OCI-LY7 (cell line): ENCODE measurements at regions of chr5 and their contacts with region 1.

Region 1: DNA sequence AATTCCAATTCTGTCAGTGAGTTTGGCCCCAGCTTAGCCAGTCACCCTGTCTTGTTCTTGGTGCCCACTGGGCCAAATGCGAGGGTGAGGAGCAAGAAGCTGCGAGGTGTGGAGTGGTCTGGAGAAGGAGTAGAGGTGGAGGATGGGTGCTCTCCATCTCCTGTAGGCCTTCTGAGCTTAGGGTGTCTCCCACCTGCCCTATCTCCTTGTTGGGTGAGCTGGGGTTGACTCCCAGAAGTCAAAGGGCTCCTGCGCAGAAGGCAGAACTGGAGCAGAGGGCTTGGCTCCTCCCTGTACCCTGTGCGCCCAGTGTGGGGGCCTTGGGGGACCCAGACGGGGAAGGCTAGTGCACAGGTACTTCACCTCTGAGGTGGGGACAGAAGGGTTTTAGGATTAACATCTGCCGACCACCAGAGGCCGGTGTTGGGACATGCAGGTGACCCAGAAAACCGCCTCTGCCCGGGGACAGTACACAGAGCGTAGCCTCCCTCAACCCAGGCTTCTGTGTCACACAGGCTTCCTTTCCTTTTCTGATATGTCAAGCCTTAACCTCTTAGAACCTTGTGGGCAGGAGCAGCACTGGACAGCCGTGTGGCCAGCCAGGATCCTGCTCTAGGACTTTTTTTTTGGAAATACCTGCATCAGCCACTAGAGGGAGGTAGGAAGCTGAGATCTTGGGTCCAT is 16.9 kb downstream of the IL5 start:
- DNase-seq: peak; percentile 65
- H3K4me3 ChIP-seq: no peak overlapping the region
- H3K27ac ChIP-seq: no peak overlapping the region
- H3K4me1 ChIP-seq: peaks cover 29% of the 10 kb centered on the region
- CTCF ChIP-seq: peak; percentile 100

Region 2: GRCh38 chr5:132595624-132596023 is 69.2 kb after region 1 on chr5:
- CTCF ChIA-PET with region 1: no interaction called
- POLR2A ChIA-PET with region 1: no interaction called
- intact Hi-C with region 1: loop called (anchors 5 kb)
- DNase-seq: no peak
- H3K4me3 ChIP-seq: no peak overlapping the region
- H3K27ac ChIP-seq: no peak overlapping the region
- H3K4me1 ChIP-seq: no peaks in the 10 kb centered on the region
- CTCF ChIP-seq: no peak

Region 3: GRCh38 chr5:132639706-132640130 is 113.3 kb after region 1 on chr5:
- CTCF ChIA-PET with region 1: no interaction called
- POLR2A ChIA-PET with region 1: no interaction called
- intact Hi-C with region 1: loop called (anchors 5 kb)
- DNase-seq: no peak
- H3K4me3 ChIP-seq: no peak overlapping the region
- H3K27ac ChIP-seq: no peak overlapping the region
- H3K4me1 ChIP-seq: no peaks in the 10 kb centered on the region
- CTCF ChIP-seq: no peak

Region 4: GRCh38 chr5:132704875-132705274 is 178.4 kb after region 1 on chr5:
- CTCF ChIA-PET with region 1: no interaction called
- POLR2A ChIA-PET with region 1: no interaction called
- intact Hi-C with region 1: loop called (anchors 5 kb)
- DNase-seq: no peak
- H3K4me3 ChIP-seq: no peak overlapping the region
- H3K27ac ChIP-seq: no peak overlapping the region
- H3K4me1 ChIP-seq: no peaks in the 10 kb centered on the region
- CTCF ChIP-seq: no peak

Region 5: DNA sequence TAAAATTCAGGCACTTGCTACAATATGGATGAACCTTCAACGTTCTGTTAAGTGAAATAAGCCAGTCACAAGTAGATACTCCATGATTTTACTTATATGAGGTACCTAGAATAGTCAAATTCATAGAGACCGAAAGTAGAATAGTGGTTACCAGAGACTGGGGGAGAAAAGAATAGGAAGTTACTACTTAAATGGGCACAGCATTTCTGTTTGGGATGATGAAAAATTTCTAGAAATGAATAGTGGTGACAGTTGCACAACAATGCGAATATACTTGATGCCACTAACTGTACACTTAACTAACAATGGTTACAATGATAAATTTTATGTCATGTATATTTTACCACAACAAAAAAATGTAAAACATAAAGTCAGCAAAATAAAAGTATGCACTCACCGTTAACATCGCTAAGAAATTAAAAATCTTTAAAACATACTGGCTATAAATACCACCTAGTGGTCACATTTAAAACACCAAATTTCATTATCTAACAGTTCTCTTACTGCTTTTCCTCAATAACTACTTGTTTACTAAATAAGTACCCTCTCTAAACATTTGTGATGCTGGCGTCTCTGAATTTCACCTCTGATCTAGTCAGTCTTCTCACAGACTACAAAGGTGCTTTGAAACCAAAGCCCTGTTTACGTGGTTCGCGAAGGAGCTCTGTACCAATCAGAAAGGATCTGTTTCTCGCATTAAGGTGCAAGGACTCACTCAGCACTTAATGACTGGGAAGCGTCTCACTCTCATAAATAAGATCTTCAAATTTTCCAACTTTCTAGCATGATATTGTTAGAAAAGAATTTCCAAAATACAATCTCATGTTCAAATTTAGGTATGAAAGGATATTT is 188.2 kb after region 1 on chr5:
- CTCF ChIA-PET with region 1: no interaction called
- POLR2A ChIA-PET with region 1: no interaction called
- intact Hi-C with region 1: loop called (anchors 5 kb)
- DNase-seq: peak; percentile 12
- H3K4me3 ChIP-seq: no peak overlapping the region
- H3K27ac ChIP-seq: no peak overlapping the region
- H3K4me1 ChIP-seq: no peaks in the 10 kb centered on the region
- CTCF ChIP-seq: peak; percentile 80

Region 6: GRCh38 chr5:132797651-132798050 is 271.2 kb after region 1 on chr5:
- CTCF ChIA-PET with region 1: interaction called, 3 read pairs
- POLR2A ChIA-PET with region 1: no interaction called
- intact Hi-C with region 1: loop called (anchors 5 kb)
- DNase-seq: no peak
- H3K4me3 ChIP-seq: no peak overlapping the region
- H3K27ac ChIP-seq: no peak overlapping the region
- H3K4me1 ChIP-seq: no peaks in the 10 kb centered on the region
- CTCF ChIP-seq: no peak

Region 7: DNA sequence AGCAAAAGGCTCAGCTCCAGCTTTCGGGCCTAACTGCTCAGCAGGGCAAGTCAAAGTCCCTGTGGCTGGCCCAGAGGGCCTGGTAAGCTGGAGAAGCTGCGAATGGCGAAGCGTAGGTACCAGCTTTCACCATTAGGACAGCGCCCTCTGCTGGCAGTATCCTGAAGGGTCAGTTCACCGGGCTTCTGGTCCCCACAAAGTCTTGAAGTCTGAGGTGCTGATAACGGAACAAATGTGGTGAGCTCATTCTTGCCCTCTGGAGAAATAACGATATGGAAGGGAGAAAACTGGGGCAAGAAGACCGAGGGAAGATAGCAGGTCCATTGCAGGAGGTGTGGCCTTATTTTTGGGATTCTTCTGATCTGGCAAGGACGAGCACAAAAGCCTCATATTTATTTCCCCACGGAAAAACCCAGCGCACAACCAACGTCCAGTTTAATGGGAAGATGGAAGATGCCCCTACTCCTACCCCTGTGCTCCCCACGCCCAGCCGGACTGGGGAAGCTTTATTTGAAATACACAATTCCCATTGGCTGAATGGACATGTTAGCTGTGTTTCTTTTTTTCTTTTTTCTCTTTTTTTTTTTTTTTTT is 293.8 kb after region 1 on chr5:
- CTCF ChIA-PET with region 1: no interaction called
- POLR2A ChIA-PET with region 1: no interaction called
- intact Hi-C with region 1: loop called (anchors 1 kb)
- DNase-seq: peak; percentile 84
- H3K4me3 ChIP-seq: no peak overlapping the region
- H3K27ac ChIP-seq: no peak overlapping the region
- H3K4me1 ChIP-seq: no peaks in the 10 kb centered on the region
- CTCF ChIP-seq: peak; percentile 95